ENCODE measurements at regions of chr9 and their contacts with region 1.

Region 1: DNA sequence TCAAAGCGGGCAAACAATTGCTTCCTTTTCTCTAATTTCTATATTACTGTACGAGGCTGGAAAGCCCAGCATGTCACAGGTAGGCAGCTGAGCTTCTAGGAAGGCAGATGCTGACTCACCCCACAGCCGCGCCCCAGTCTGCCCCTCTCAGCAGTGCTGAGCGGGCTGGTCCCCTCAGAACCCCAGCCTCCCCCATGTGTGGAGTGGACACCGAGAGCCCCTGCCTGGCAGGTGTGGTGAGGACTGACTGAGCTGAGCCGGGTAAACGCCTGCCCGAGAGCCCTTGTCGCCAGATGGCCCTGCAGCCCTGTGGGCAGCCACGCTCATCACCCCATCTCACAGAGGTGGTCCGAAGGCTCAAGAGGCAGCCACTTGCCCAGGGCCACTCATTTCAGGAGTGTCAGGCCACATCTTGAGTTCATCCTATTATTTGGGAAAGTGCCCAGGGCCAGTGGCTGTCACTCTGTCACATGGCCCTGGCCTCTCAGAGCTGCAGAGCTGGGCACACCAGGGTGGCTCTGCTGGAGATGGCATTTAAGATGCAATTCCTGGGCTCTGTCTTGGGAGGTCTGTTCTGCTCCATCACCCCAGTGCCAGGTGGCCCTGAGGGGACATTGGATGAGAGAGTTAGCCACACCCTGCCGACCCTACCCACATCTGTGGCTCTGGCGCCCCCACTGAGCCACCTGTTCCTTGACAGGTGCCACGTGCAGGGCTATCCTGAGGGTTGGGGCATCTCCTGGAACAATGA is 12.4 kb downstream of the CARD19 start:
- DNase-seq: peak; percentile 81
- H3K4me3 Mint-ChIP-seq: peak overlapping the region; percentile 55
- H3K27ac Mint-ChIP-seq: peak overlapping the region; percentile 81
- H3K4me1 Mint-ChIP-seq: peaks cover 41% of the 10 kb centered on the region
- H3K27me3 Mint-ChIP-seq: no peaks in the 10 kb centered on the region

Region 2: GRCh38 chr9:93003552-93004407 is 104.7 kb before region 1 on chr9:
- intact Hi-C with region 1: loop called (anchors 1 kb)
- DNase-seq: peak; percentile 89
- H3K4me3 Mint-ChIP-seq: peak overlapping the region; percentile 42
- H3K27ac Mint-ChIP-seq: peak overlapping the region; percentile 85
- H3K4me1 Mint-ChIP-seq: peaks cover 37% of the 10 kb centered on the region
- H3K27me3 Mint-ChIP-seq: no peaks in the 10 kb centered on the region

Region 3: GRCh38 chr9:93288891-93289883 is 180.7 kb after region 1 on chr9:
- intact Hi-C with region 1: no loop called
- DNase-seq: no peak
- H3K4me3 Mint-ChIP-seq: no peak overlapping the region
- H3K27ac Mint-ChIP-seq: no peak overlapping the region
- H3K4me1 Mint-ChIP-seq: no peaks in the 10 kb centered on the region
- H3K27me3 Mint-ChIP-seq: peaks cover 9% of the 10 kb centered on the region

Region 4: GRCh38 chr9:93302551-93303257 is 194.2 kb after region 1 on chr9:
- intact Hi-C with region 1: loop called (anchors 2 kb)
- DNase-seq: peak; percentile 85
- H3K4me3 Mint-ChIP-seq: no peak overlapping the region
- H3K27ac Mint-ChIP-seq: no peak overlapping the region
- H3K4me1 Mint-ChIP-seq: peaks cover 6% of the 10 kb centered on the region
- H3K27me3 Mint-ChIP-seq: no peaks in the 10 kb centered on the region

Measured in activated CD4-positive, alpha-beta T cell treated with anti-CD3 and anti-CD28 coated beads, Interleukin-2, amount 10 ng/mL, durations not matched to agents 24 days and 14 days (primary cell).